Activated CD4-positive, alpha-beta memory T cell treated with anti-CD3 and anti-CD28 coated beads, Interleukin-2, amount 10 ng/mL, durations not matched to agents 7 days and 5 days (primary cell): ENCODE measurements at regions of chr1 and their contacts with region 1.

Region 1: DNA sequence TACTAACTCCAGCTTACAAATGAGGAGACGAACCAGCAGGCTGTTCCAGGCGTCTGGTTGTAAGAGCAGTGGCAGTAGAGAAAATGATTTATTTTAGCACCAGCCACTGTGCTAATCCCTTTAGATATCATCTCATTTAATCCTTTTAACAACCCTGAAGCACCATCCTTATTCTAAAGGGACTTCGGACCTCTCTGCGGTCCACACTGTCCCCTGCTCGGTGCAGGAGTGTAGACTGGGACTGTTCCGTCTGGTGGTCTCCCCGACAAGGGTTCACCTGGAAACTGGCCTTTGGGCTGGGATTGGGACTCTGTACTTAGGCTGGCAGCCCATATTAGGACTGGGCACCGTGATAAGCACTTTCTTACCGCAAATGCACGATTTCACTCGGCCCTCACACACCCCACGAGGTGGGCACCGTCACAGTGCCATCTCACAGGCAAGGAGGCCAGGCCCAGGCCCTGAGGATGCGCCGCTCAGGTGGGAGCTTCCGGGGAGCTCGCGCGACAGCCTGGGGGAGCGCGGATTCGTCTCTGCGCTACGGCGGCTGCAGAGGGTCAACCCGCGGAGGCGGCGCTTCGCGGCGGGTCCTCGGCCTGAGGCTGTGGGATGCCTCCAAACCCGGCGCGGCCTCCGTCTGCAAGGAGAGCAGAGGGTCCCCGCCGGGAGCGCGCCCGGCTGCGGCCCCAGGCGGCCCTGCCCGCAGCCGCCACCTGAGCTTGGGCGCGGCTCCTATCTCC is 45.2 kb downstream of the ATP1A1 start:
- DNase-seq: peak; percentile 90
- H3K4me3 Mint-ChIP-seq: peak overlapping the region; percentile 87
- H3K27ac Mint-ChIP-seq: peak overlapping the region; percentile 83
- H3K4me1 Mint-ChIP-seq: peaks cover 50% of the 10 kb centered on the region
- H3K27me3 Mint-ChIP-seq: peaks cover 9% of the 10 kb centered on the region

Region 2: GRCh38 chr1:116075577-116076380 is 342.5 kb before region 1 on chr1:
- CTCF ChIA-PET with region 1: no interaction called
- POLR2A ChIA-PET with region 1: no interaction called
- DNase-seq: no peak
- H3K4me3 Mint-ChIP-seq: no peak overlapping the region
- H3K27ac Mint-ChIP-seq: no peak overlapping the region
- H3K4me1 Mint-ChIP-seq: no peaks in the 10 kb centered on the region
- H3K27me3 Mint-ChIP-seq: peaks cover 2% of the 10 kb centered on the region

Region 3: GRCh38 chr1:116377541-116378529 is 40.4 kb before region 1 on chr1:
- CTCF ChIA-PET with region 1: interaction called, 20 read pairs
- POLR2A ChIA-PET with region 1: interaction called, 39 read pairs
- DNase-seq: peak; percentile 49
- H3K4me3 Mint-ChIP-seq: peak overlapping the region; percentile 77
- H3K27ac Mint-ChIP-seq: peak overlapping the region; percentile 83
- H3K4me1 Mint-ChIP-seq: peaks cover 75% of the 10 kb centered on the region
- H3K27me3 Mint-ChIP-seq: no peaks in the 10 kb centered on the region

Region 4: DNA sequence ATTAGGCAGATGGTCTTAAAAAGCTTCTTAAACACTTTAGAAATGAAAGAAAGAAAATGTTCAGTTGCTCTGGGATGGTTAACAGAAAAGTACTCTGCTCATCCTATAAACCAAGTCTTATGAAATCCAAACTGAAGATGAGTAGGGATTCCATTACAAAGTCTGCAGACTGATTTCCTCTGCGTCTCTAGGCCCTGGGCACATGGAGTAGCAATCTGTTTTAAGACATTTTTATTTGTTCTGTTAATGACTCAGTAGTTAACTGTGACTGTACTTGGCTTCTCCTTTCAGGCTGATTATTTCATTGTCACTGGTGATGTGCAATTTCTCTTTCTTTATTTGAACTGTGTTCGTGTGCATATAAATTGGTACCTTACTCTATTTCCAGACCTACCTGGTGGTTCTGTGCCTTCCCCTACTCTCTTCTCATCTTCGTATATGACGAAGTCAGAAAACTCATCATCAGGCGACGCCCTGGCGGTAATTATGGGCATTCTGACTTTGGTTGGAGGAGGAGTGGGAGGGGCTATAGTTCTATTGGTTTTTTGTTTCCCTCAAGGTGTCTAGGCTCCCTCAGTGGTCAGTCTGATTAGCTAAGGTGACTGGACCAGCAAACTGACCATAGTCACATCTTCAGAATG is 14.6 kb before region 1 on chr1:
- CTCF ChIA-PET with region 1: no interaction called
- POLR2A ChIA-PET with region 1: interaction called, 24 read pairs
- DNase-seq: no peak
- H3K4me3 Mint-ChIP-seq: no peak overlapping the region
- H3K27ac Mint-ChIP-seq: peak overlapping the region; percentile 1
- H3K4me1 Mint-ChIP-seq: peaks cover 16% of the 10 kb centered on the region
- H3K27me3 Mint-ChIP-seq: no peaks in the 10 kb centered on the region

Region 5: GRCh38 chr1:116448813-116449281 is 30.6 kb after region 1 on chr1:
- CTCF ChIA-PET with region 1: no interaction called
- POLR2A ChIA-PET with region 1: no interaction called
- DNase-seq: no peak
- H3K4me3 Mint-ChIP-seq: no peak overlapping the region
- H3K27ac Mint-ChIP-seq: no peak overlapping the region
- H3K4me1 Mint-ChIP-seq: no peaks in the 10 kb centered on the region
- H3K27me3 Mint-ChIP-seq: no peaks in the 10 kb centered on the region

Region 6: DNA sequence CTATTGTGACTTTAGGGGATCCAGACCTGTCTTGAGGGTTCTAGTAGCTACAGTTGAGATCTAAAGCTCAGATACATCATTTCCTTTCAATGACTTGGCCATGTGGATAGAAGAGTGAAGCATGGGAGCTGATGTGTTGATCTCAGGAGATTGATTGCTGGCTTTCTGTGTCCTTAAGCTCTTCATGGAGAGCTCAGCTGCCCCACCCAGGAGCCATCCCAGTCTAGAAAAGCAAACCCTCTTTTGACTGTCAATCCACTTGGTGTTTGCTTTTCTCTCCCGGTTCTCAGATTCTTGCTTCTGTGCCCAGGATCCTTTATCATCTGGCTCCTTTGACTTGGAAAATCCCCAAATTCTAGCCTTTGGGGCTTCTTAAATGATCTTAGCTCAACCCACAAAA is 42.0 kb after region 1 on chr1:
- CTCF ChIA-PET with region 1: no interaction called
- POLR2A ChIA-PET with region 1: no interaction called
- DNase-seq: no peak
- H3K4me3 Mint-ChIP-seq: no peak overlapping the region
- H3K27ac Mint-ChIP-seq: no peak overlapping the region
- H3K4me1 Mint-ChIP-seq: no peaks in the 10 kb centered on the region
- H3K27me3 Mint-ChIP-seq: peaks cover 6% of the 10 kb centered on the region

Region 7: DNA sequence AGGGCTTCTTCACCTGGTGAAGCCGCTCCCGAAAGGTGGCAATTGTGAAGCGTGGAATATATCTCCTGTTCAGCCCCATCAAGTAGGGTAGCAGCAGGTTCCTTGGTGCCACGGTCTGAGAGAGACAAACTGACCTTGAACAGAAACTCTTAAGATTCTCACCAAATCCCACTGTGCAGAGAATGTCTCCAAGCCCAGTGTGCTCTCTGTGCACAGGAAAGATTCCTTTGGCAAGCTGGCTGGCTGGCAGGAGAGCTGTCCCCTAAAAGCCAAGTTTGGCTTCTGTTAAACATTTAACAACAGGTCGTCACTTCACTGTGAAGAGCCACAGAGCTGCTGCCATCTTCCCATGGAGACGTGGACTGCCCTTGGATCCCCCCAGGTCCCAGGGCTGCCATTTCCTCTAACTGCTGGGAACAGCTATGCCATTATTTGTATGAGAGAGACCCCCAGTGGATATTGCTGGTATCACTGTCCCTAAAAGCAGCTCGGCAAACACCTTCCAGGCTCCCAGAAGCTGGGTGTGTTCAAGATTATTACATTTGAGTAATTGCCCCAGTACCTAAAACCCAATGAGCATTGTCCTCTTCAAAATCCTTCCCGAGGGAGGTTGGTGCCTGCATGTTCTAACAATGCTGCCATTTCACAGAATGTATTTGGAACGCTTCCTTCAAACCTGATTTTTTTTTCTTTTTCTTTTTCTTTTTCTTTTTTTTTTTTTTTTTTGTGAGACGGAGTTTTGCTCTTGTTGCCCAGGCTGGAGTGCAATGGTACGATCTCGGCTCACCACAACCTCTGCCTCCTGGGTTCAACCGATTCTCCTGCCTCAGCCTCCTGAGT is 80.7 kb after region 1 on chr1:
- CTCF ChIA-PET with region 1: interaction called, 12 read pairs
- POLR2A ChIA-PET with region 1: interaction called, 14 read pairs
- DNase-seq: peak; percentile 54
- H3K4me3 Mint-ChIP-seq: no peak overlapping the region
- H3K27ac Mint-ChIP-seq: peak overlapping the region; percentile 53
- H3K4me1 Mint-ChIP-seq: peaks cover 64% of the 10 kb centered on the region
- H3K27me3 Mint-ChIP-seq: no peaks in the 10 kb centered on the region